Testis (tissue), 5 donors: ENCODE measurements at regions of chr7 and their contacts with region 1.

Region 1: GRCh38 chr7:87148332-87148955 is 3.8 kb upstream of the DMTF1 start:
- DNase-seq: no peak
- H3K4me3 ChIP-seq: no peak overlapping the region
- H3K27ac ChIP-seq: no peak overlapping the region
- H3K4me1 ChIP-seq: no peaks in the 10 kb centered on the region
- H3K27me3 ChIP-seq: no peaks in the 10 kb centered on the region
- CTCF ChIP-seq: peak in 2 of 3 experiments; percentile 28 to 33
- POLR2A ChIP-seq: no peak

Region 2: GRCh38 chr7:86926732-86927131 is 221.7 kb before region 1 on chr7:
- intact Hi-C with region 1: loop called (anchors 5 kb)
- DNase-seq: peak; percentile 60
- H3K4me3 ChIP-seq: no peak overlapping the region
- H3K27ac ChIP-seq: no peak overlapping the region
- H3K4me1 ChIP-seq: no peaks in the 10 kb centered on the region
- H3K27me3 ChIP-seq: no peaks in the 10 kb centered on the region
- CTCF ChIP-seq: peak in 2 of 3 experiments; percentile 46 to 51
- POLR2A ChIP-seq: no peak

Region 3: GRCh38 chr7:87219545-87220025 is 71.1 kb after region 1 on chr7 and contains the start of gene TMEM243:
- intact Hi-C with region 1: loop called (anchors 10 kb)
- DNase-seq: peak; percentile 80
- H3K4me3 ChIP-seq: peak within 1 kb of the TSS; percentile 77 to 83
- H3K27ac ChIP-seq: peak within 1 kb of the TSS; percentile 75 to 86
- H3K4me1 ChIP-seq: no peaks in the 10 kb centered on the region
- H3K27me3 ChIP-seq: no peaks in the 10 kb centered on the region
- CTCF ChIP-seq: no peak
- POLR2A ChIP-seq: no peak
- total RNA-seq, gene TMEM243: 21.9 to 26.3 TPM